Activated CD8-positive, alpha-beta T cell treated with anti-CD3 and anti-CD28 coated beads for 36 hours (primary cell): ENCODE measurements at regions of chr7 and their contacts with region 1.

Region 1: DNA sequence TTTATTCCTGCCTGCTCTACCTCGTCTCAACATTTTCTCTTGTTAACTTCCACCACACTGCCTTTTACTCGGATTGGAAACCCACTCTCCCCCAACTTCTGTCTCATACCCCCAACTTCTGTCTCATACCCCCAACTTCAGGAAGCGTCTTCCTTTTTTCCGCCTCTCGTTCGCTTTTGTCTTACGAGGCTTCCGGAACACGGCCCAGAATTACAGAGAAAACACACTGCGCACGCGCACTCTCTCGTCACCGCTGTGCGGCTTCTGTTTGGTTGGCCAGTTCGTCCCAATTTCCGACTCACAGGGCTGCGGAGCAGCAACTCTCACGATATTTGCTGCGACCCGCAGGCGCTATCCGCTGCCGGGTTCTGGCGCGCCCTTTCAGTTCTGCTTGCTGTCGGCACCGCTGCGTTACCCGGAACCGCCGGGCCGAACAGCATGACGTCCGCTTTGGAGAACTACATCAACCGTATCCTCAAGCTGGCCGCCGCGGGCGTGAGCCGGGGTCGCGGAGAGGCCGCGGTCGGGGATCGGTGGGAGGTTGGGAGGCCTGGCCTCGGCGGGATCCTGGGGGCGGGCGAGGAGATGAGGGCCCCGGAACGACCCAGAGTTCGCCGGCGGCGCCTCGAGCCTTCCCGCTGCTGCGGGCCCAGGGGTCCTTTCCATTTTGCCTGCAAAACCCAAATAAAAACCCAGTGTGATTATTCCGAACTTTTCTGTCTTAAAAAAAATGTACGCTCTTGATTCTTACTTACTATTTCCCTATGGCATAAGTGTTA is at the start of gene LSM8:
- DNase-seq: peak; percentile 97
- ATAC-seq: peak; percentile 97
- H3K4me3 Mint-ChIP-seq: peak within 1 kb of the TSS; percentile 91
- H3K27ac Mint-ChIP-seq: peak within 1 kb of the TSS; percentile 98
- H3K4me1 Mint-ChIP-seq: peaks cover 30% of the 10 kb centered on the region
- H3K27me3 Mint-ChIP-seq: no peaks in the 10 kb centered on the region
- CTCF ChIP-seq: no peak
- total RNA-seq, gene LSM8: 36.6 to 42.0 TPM

Region 2: GRCh38 chr7:118129041-118129795 is 54.8 kb before region 1 on chr7:
- CTCF ChIA-PET with region 1: no interaction called
- POLR2A ChIA-PET with region 1: no interaction called
- intact Hi-C with region 1: no loop called
- DNase-seq: no peak
- ATAC-seq: no peak
- H3K4me3 Mint-ChIP-seq: no peak overlapping the region
- H3K27ac Mint-ChIP-seq: no peak overlapping the region
- H3K4me1 Mint-ChIP-seq: no peaks in the 10 kb centered on the region
- H3K27me3 Mint-ChIP-seq: peaks cover 6% of the 10 kb centered on the region
- CTCF ChIP-seq: no peak

Region 3: GRCh38 chr7:118140468-118140867 is 43.5 kb before region 1 on chr7:
- CTCF ChIA-PET with region 1: no interaction called
- POLR2A ChIA-PET with region 1: no interaction called
- intact Hi-C with region 1: no loop called
- DNase-seq: no peak
- ATAC-seq: no peak
- H3K4me3 Mint-ChIP-seq: no peak overlapping the region
- H3K27ac Mint-ChIP-seq: no peak overlapping the region
- H3K4me1 Mint-ChIP-seq: no peaks in the 10 kb centered on the region
- H3K27me3 Mint-ChIP-seq: peaks cover 3% of the 10 kb centered on the region
- CTCF ChIP-seq: no peak

Region 4: GRCh38 chr7:118202061-118202460 is 18.1 kb after region 1 on chr7:
- CTCF ChIA-PET with region 1: no interaction called
- POLR2A ChIA-PET with region 1: no interaction called
- intact Hi-C with region 1: no loop called
- DNase-seq: no peak
- ATAC-seq: no peak
- H3K4me3 Mint-ChIP-seq: no peak overlapping the region
- H3K27ac Mint-ChIP-seq: no peak overlapping the region
- H3K4me1 Mint-ChIP-seq: peaks cover 6% of the 10 kb centered on the region
- H3K27me3 Mint-ChIP-seq: no peaks in the 10 kb centered on the region
- CTCF ChIP-seq: no peak

Region 5: DNA sequence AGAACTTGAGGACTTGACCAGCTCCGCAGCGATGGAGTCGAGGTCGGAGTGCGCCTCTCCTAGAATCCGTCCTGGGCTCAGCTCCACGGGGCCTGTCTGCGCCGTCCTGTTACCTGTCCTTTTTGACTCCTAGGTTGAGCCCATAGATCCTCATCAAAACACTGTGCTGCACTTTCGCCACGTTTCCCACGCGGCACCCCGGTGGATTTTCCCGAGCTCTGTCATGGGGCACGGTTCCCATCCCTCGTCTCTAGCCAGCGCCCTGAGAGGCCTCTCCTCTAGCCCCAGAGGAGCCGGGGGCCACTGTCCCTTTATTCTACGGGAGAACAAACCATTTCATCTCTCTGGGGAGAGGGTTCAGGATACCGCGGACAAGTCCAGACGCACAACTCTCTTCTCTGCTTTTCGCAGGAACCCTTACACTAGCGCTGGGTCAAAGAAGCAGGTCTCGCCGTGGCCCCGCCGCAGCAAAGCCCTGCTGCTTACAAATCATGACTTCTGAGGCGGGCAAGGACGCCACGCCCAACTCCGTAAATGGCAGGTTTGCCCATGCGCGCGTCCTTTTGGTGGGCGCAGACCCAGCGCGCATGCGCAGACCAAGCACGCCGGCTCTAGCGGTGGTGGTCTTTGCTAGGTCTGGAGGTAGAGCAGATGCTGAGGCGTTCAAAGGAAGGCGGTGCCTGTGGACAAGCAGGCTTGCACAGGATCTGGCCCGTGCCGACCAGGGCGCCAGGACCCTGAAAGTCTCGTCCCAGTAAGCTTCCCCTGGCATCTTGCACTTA is 30.3 kb after region 1 on chr7:
- CTCF ChIA-PET with region 1: no interaction called
- POLR2A ChIA-PET with region 1: no interaction called
- intact Hi-C with region 1: loop called (anchors 2 kb)
- DNase-seq: peak; percentile 89
- ATAC-seq: peak; percentile 96
- H3K4me3 Mint-ChIP-seq: peak overlapping the region; percentile 84
- H3K27ac Mint-ChIP-seq: peak overlapping the region; percentile 83
- H3K4me1 Mint-ChIP-seq: peaks cover 10% of the 10 kb centered on the region
- H3K27me3 Mint-ChIP-seq: peaks cover 6% of the 10 kb centered on the region
- CTCF ChIP-seq: no peak

Region 6: DNA sequence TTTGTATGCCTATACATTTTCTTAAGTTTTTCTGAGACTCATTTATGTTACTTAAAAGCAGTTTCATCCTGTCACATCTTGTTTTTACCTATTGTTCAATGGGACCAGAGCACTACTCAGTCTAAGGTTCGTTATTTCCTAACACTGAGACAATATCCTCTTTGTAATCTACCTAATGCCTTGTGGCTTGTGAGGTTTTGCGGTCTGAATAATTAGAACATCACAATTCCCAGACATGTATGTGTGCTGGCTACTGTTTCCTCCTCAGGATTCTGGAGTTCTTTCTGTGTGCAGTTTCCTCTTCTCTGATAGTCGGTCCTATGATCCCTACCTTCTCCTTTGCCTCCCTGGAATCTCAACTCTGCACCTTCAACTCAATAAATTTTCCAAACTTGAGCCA is 660.8 kb after region 1 on chr7:
- CTCF ChIA-PET with region 1: no interaction called
- POLR2A ChIA-PET with region 1: no interaction called
- intact Hi-C with region 1: no loop called
- DNase-seq: no peak
- ATAC-seq: no peak
- H3K4me3 Mint-ChIP-seq: no peak overlapping the region
- H3K27ac Mint-ChIP-seq: no peak overlapping the region
- H3K4me1 Mint-ChIP-seq: no peaks in the 10 kb centered on the region
- H3K27me3 Mint-ChIP-seq: no peaks in the 10 kb centered on the region
- CTCF ChIP-seq: no peak